Endothelial cell of umbilical vein (primary cell): ENCODE measurements at regions of chr2 and their contacts with region 1.

Region 1: DNA sequence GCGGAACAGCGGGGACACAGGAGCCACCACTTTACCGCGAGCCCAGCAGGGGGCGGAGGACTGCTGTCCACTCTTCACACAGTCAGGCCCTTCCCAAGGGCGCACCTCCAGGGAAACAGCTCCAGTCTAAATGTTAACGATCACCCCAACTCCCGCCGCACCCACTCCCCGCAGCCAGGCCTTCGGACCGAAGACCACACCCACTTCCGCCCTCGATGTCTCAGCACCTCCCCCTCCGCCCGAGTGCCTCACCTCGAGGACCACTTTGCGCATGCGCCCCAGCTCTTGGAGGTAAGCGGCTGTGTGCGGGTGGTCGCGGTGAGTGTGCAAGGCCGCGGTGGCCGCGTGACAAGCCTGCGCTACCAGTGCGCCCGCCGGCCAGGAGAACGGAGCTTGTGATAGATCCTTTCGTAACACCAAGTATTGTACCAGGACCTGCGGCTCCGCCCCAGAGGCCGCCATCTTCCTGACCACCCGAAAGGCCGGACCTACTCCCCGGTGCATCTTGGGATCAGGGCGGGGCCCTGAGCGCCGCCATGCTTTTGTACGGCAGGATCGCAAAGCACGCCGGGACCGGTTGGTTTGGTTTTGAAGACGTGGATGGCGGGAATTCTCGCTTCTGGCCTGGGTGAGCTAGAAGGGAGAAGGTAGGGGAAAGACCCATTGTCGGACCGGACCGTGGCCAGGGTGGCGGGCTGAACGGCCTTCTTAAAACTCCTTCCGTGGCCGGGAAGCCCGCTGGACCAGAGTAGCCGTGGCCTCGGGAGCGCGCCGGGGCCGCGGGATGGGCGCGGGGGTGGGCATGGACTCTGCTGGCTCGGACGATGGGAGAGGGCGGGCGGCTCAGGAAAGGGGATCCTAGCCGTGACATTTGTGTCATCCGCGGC is at the starts of genes CENPO and PTRHD1:
- DNase-seq: peak; percentile 98
- H3K4me3 ChIP-seq: peak within 1 kb of the TSS; percentile 57 to 82 (median 61)
- H3K27ac ChIP-seq: peak within 1 kb of the TSS; percentile 81
- H3K4me1 ChIP-seq: peaks cover 20% of the 10 kb centered on the region
- H3K27me3 ChIP-seq: no peaks in the 10 kb centered on the region
- CTCF ChIP-seq: peak; percentile 67 to 82
- POLR2A ChIP-seq: no peak
- total RNA-seq, gene CENPO: 42.2 and 45.3 TPM in 2 replicates
- total RNA-seq, gene PTRHD1: 35.6 and 41.1 TPM in 2 replicates

Region 2: GRCh38 chr2:24421668-24422067 is 371.4 kb before region 1 on chr2:
- CTCF ChIA-PET with region 1: interaction called, 16 read pairs
- POLR2A ChIA-PET with region 1: no interaction called
- dilution Hi-C with region 1: no loop called
- intact Hi-C with region 1: loop called (anchors 1 kb)
- DNase-seq: peak; percentile 62
- H3K4me3 ChIP-seq: no peak overlapping the region
- H3K27ac ChIP-seq: no peak overlapping the region
- H3K4me1 ChIP-seq: no peaks in the 10 kb centered on the region
- H3K27me3 ChIP-seq: peaks cover 3 to 5% of the 10 kb centered on the region in 2 experiments
- CTCF ChIP-seq: peak; percentile 48 to 63
- POLR2A ChIP-seq: no peak

Region 3: DNA sequence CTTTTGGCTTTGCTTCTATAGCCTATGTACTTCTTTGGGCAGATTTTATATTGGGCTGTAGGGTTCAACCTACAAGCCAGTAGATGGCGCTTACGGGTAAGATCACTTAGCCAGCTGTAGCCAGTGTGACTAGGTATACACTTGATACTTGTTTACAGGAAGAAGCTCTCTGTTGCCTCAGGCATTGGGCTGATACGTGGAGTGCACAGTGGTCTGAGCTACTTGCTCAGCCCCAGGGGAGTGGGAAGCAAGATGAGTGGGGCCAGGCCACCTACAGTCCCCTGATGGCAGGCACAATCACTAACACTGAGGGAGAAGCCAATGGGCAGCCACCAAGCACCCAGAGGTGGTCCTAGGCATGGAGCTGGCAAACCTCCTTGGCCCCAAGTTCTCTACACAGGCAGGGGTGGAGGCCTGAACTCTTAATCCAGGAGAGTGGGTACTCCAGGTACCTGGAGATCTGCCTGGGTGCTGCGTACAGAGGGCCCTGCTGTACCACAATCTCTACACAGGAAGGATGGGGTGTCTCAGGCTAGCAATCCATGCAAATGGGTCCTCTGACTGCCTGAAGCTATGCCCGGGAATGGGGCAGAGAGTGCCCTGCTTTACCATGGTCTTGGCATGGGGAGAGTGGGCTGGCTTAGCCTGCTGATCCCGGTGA is 179.8 kb before region 1 on chr2:
- CTCF ChIA-PET with region 1: interaction called, 18 read pairs
- POLR2A ChIA-PET with region 1: no interaction called
- dilution Hi-C with region 1: no loop called
- intact Hi-C with region 1: loop called (anchors 1 kb)
- DNase-seq: peak; percentile 45
- H3K4me3 ChIP-seq: no peak overlapping the region
- H3K27ac ChIP-seq: no peak overlapping the region
- H3K4me1 ChIP-seq: no peaks in the 10 kb centered on the region
- H3K27me3 ChIP-seq: no peaks in the 10 kb centered on the region
- CTCF ChIP-seq: peak; percentile 49 to 55
- POLR2A ChIP-seq: no peak

Region 4: GRCh38 chr2:24779116-24779515 is 14.0 kb before region 1 on chr2:
- CTCF ChIA-PET with region 1: interaction called, 10 read pairs
- POLR2A ChIA-PET with region 1: interaction called, 4 read pairs
- dilution Hi-C with region 1: no loop called
- intact Hi-C with region 1: no loop called
- DNase-seq: peak; percentile 17
- H3K4me3 ChIP-seq: no peak overlapping the region
- H3K27ac ChIP-seq: no peak overlapping the region
- H3K4me1 ChIP-seq: peaks cover 5% of the 10 kb centered on the region
- H3K27me3 ChIP-seq: no peaks in the 10 kb centered on the region
- CTCF ChIP-seq: no peak
- POLR2A ChIP-seq: no peak

Region 5: GRCh38 chr2:24816884-24817283 is 23.8 kb after region 1 on chr2:
- CTCF ChIA-PET with region 1: interaction called, 17 read pairs
- POLR2A ChIA-PET with region 1: no interaction called
- dilution Hi-C with region 1: no loop called
- intact Hi-C with region 1: no loop called
- DNase-seq: peak; percentile 87
- H3K4me3 ChIP-seq: no peak overlapping the region
- H3K27ac ChIP-seq: peak overlapping the region; percentile 74
- H3K4me1 ChIP-seq: peaks cover 19% of the 10 kb centered on the region
- H3K27me3 ChIP-seq: no peaks in the 10 kb centered on the region
- CTCF ChIP-seq: no peak
- POLR2A ChIP-seq: no peak

Region 6: DNA sequence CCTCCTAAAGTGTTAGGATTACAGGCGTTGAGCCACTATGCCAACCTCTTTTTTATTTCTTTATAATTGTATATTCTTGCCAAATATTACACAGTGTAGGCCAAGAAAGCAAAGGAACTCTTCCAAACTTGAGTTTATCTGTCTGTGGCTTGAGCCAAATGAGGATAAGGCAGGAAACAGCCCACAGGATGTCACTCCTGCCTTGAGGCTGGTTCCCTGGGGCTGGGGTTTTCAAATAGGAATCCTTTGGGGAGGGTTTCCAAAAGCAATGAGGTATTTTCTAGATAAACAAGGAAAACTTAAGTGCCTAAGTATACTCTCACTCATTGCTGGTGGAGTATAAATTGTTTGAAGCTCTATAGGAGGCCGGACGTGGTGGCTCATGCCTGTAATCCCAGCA is 70.5 kb after region 1 on chr2:
- CTCF ChIA-PET with region 1: no interaction called
- POLR2A ChIA-PET with region 1: no interaction called
- dilution Hi-C with region 1: no loop called
- intact Hi-C with region 1: no loop called
- DNase-seq: no peak
- H3K4me3 ChIP-seq: no peak overlapping the region
- H3K27ac ChIP-seq: no peak overlapping the region
- H3K4me1 ChIP-seq: no peaks in the 10 kb centered on the region
- H3K27me3 ChIP-seq: no peaks in the 10 kb centered on the region
- CTCF ChIP-seq: no peak
- POLR2A ChIP-seq: no peak